Right ventricle myocardium inferior (tissue), 1 donor: ENCODE measurements at regions of chr19 and their contacts with region 1.

Region 1: DNA sequence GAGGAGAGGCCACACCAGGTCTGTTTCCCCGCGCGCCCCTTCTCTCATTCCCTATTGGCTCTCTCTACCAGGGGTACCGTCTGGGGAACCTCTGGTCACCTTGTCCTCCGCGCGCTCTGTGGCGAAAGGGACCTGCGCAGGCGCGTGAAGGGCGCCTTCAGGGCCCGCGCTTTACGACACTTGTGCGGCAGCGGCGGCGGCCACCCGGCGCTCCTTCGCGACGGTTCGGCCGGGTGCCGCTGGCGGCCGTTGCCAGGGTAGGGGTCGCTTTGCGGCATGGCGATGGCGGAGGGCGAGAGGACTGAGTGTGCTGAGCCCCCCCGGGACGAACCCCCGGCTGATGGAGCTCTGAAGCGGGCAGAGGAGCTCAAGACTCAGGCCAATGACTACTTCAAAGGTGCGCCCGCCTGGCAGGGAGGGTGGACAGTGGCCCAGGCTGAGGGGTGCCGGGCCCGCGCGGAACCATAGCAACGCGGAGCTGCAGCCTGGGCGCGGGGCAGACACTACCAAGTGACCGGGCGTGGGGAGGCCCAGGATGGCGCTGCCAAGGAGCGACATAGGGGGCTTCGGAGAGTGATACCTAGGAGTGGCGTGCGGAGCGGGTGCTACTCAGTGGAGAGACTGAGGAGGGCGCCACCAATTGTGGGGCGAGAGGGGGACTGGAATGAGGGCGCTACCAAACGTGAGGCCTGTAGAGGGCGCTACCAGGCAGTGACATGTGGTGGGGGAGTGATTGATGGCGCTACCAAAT is at the start of gene PPP5C:
- DNase-seq: peak; percentile 96
- ATAC-seq: peak; percentile 88
- total RNA-seq, gene PPP5C: 77.3 TPM

Region 2: GRCh38 chr19:46303691-46304397 is 43.2 kb before region 1 on chr19:
- intact Hi-C with region 1: loop called (anchors 5 kb)
- DNase-seq: peak; percentile 76
- ATAC-seq: no peak